HCT116 (cell line): ENCODE measurements at regions of chr14 and their contacts with region 1.

Region 1: GRCh38 chr14:100417466-100417865 is 94.3 kb downstream of the SLC25A47 start:
- DNase-seq: peak; percentile 63
- ATAC-seq: peak; percentile 97
- H3K4me3 ChIP-seq: no peak overlapping the region
- H3K27ac ChIP-seq: peak overlapping the region; percentile 58
- H3K4me1 ChIP-seq: peaks cover 21 to 26% of the 10 kb centered on the region in 2 experiments
- H3K27me3 ChIP-seq: no peaks in the 10 kb centered on the region
- CTCF ChIP-seq: peak; percentile 71 to 90 (median 84); a peak in 5 of 6 replicates
- POLR2A ChIP-seq: no peak
- RAD21 ChIP-seq: peak; percentile 93

Region 2: GRCh38 chr14:100440187-100440631 is 22.7 kb after region 1 on chr14:
- CTCF ChIA-PET with region 1: interaction called, 28 read pairs
- POLR2A ChIA-PET with region 1: interaction called, 3 read pairs
- RAD21 ChIA-PET with region 1: interaction called, 6 to 8 read pairs
- intact Hi-C with region 1: no loop called
- DNase-seq: no peak
- ATAC-seq: peak; percentile 75
- H3K4me3 ChIP-seq: peak overlapping the region in 1 of 2 experiments; percentile 42; a peak in 2 of 4 replicates
- H3K27ac ChIP-seq: peak overlapping the region; percentile 77
- H3K4me1 ChIP-seq: peaks cover 43 to 78% of the 10 kb centered on the region in 2 experiments
- H3K27me3 ChIP-seq: no peaks in the 10 kb centered on the region
- CTCF ChIP-seq: peak; percentile 87 to 94 (median 93)
- POLR2A ChIP-seq: no peak
- RAD21 ChIP-seq: peak; percentile 98

Region 3: GRCh38 chr14:100547633-100548294 is 130.3 kb after region 1 on chr14:
- CTCF ChIA-PET with region 1: interaction called, 6 read pairs
- POLR2A ChIA-PET with region 1: no interaction called
- RAD21 ChIA-PET with region 1: interaction called in 1 of 2 experiments, 3 read pairs
- intact Hi-C with region 1: loop called (anchors 10 kb)
- DNase-seq: peak; percentile 55
- ATAC-seq: peak; percentile 41
- H3K4me3 ChIP-seq: peak overlapping the region; percentile 40 to 69; a peak in 3 of 4 replicates
- H3K27ac ChIP-seq: peak overlapping the region; percentile 92
- H3K4me1 ChIP-seq: peaks cover 26 to 39% of the 10 kb centered on the region in 2 experiments
- H3K27me3 ChIP-seq: no peaks in the 10 kb centered on the region
- CTCF ChIP-seq: no peak
- POLR2A ChIP-seq: no peak
- RAD21 ChIP-seq: no peak

Region 4: GRCh38 chr14:100645192-100645990 is 227.9 kb after region 1 on chr14:
- CTCF ChIA-PET with region 1: interaction called, 49 read pairs
- POLR2A ChIA-PET with region 1: interaction called, 3 read pairs
- RAD21 ChIA-PET with region 1: interaction called, 7 to 21 read pairs
- intact Hi-C with region 1: loop called (anchors 2 kb)
- DNase-seq: peak; percentile 76
- ATAC-seq: peak; percentile 92
- H3K4me3 ChIP-seq: peak overlapping the region in 1 of 2 experiments; percentile 23; a peak in 1 of 4 replicates
- H3K27ac ChIP-seq: peak overlapping the region; percentile 28; the same call in 1 of the 2 replicates
- H3K4me1 ChIP-seq: peaks cover 8 to 26% of the 10 kb centered on the region in 2 experiments
- H3K27me3 ChIP-seq: no peaks in the 10 kb centered on the region
- CTCF ChIP-seq: peak; percentile 76 to 96 (median 79)
- POLR2A ChIP-seq: no peak
- RAD21 ChIP-seq: peak; percentile 98

Region 5: GRCh38 chr14:100654814-100655740 is 237.6 kb after region 1 on chr14:
- CTCF ChIA-PET with region 1: interaction called, 23 read pairs
- POLR2A ChIA-PET with region 1: interaction called, 3 read pairs
- RAD21 ChIA-PET with region 1: interaction called, 4 to 7 read pairs
- intact Hi-C with region 1: loop called (anchors 1 kb)
- DNase-seq: no peak
- ATAC-seq: peak; percentile 89
- H3K4me3 ChIP-seq: peak overlapping the region; percentile 28 to 44; a peak in 2 of 4 replicates
- H3K27ac ChIP-seq: no peak overlapping the region
- H3K4me1 ChIP-seq: peaks cover 4 to 39% of the 10 kb centered on the region in 2 experiments; a peak in 3 of 4 replicates
- H3K27me3 ChIP-seq: no peaks in the 10 kb centered on the region
- CTCF ChIP-seq: peak in 2 of 3 experiments; percentile 69 to 93; a peak in 4 of 6 replicates
- POLR2A ChIP-seq: no peak
- RAD21 ChIP-seq: no peak

Region 6: DNA sequence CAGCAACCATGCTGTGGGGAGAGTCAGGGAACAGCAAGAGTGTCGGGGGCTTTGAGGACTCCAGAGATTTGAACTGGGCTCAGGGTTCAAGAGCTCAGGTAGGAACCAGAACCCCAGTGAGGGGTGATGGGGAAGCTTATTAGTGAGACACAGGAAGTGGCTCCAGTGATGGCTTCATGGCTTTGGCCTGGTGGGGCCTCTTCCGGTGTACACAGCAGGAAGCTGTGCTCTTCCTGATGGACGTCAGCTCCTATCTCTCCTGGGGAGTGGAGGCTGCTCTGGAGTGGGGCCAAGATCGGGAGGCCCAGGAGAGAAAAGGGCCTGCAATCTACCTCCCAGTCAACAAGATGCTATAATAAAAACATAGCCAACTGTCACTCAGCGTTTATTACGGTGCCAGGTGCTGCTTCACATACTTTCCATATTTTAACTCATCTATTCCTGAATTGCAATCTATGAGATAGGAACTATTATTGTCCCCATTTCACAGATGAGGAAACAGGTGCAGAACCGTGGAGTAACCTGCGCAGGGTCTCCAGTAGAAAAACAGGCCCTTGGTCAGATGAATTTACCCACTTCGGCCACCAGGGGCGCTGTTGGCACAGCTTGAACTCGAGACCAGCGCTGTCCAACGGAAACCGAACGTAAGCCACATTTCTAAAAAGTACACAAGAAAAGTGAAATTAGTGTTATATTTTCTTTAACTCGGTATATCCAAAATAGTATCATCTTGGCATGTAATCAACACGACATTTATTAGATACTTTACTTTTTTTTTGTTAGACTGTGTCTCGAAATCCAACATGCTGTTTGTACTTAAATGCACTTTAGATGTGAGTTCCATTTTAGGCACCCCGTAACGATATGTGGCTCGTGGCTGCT is 245.7 kb after region 1 on chr14:
- CTCF ChIA-PET with region 1: interaction called, 11 read pairs
- POLR2A ChIA-PET with region 1: no interaction called
- RAD21 ChIA-PET with region 1: no interaction called
- intact Hi-C with region 1: no loop called
- DNase-seq: peak; percentile 87
- ATAC-seq: peak; percentile 78
- H3K4me3 ChIP-seq: peak overlapping the region; percentile 28 to 51
- H3K27ac ChIP-seq: peak overlapping the region; percentile 46
- H3K4me1 ChIP-seq: peaks cover 4 to 65% of the 10 kb centered on the region in 2 experiments; a peak in 3 of 4 replicates
- H3K27me3 ChIP-seq: no peaks in the 10 kb centered on the region
- CTCF ChIP-seq: peak in 2 of 3 experiments; percentile 90 to 98; a peak in 4 of 6 replicates
- POLR2A ChIP-seq: no peak
- RAD21 ChIP-seq: no peak

Region 7: GRCh38 chr14:100900837-100901390 is 483.4 kb after region 1 on chr14:
- CTCF ChIA-PET with region 1: interaction called, 5 read pairs
- POLR2A ChIA-PET with region 1: no interaction called
- RAD21 ChIA-PET with region 1: no interaction called
- intact Hi-C with region 1: loop called (anchors 10 kb)
- DNase-seq: peak; percentile 41
- ATAC-seq: peak; percentile 88
- H3K4me3 ChIP-seq: no peak overlapping the region
- H3K27ac ChIP-seq: no peak overlapping the region
- H3K4me1 ChIP-seq: peaks cover 0 to 7% of the 10 kb centered on the region in 2 experiments; a peak in 1 of 4 replicates
- H3K27me3 ChIP-seq: 0 out of 2 replicates have a peak, but pooled peaks cover 3% of the 10 kb centered on the region
- CTCF ChIP-seq: peak; percentile 65 to 92 (median 78)
- POLR2A ChIP-seq: no peak
- RAD21 ChIP-seq: peak; percentile 97